HCT116 (cell line): ENCODE measurements at regions of chr12 and their contacts with region 1.

Region 1: DNA sequence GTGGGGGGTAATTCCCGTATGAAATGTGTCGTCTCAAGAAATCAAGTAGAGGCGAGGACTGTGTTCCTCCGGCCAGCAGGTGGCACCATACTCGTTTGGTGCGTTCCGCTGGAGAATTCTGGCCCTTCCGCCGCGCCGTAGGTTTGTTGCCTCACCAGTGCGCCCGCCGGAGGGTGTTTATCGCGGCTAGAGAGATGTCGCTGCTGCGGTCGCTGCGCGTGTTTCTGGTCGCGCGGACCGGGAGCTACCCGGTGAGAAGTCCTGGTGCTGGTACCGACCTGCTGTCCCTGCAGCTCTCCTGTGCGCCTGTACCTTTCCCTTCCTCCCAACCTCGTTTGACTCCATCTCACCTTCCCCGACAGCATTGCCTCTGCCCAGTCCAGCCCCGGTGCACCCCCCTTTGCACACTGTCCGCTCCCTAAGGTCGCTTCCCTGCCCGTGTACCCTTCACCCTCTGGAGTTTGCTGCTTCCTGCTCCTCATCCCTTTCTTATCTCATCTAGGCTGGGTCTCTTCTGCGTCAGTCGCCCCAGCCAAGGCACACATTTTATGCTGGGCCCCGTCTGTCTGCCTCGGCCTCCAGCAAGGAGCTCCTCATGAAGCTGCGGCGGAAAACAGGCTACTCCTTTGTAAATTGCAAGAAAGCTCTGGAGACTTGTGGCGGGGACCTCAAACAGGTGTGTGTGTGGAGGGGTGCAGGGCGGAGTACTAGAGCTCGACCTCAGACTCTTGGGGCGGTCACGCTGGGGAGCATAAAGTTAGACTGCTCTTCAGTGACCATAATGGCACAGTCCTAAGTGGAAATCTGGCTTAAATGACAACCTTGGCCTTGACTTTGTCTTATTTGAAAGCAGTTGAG is at the start of gene TSFM:
- DNase-seq: peak; percentile 89
- ATAC-seq: peak; percentile 89
- H3K4me3 ChIP-seq: peak within 1 kb of the TSS; percentile 98 to 100
- H3K27ac ChIP-seq: peak within 1 kb of the TSS; percentile 53
- H3K4me1 ChIP-seq: peaks cover 6 to 10% of the 10 kb centered on the region in 2 experiments
- H3K27me3 ChIP-seq: no peaks in the 10 kb centered on the region
- CTCF ChIP-seq: peak; percentile 76 to 93 (median 85)
- POLR2A ChIP-seq: peak; percentile 79
- RAD21 ChIP-seq: peak; percentile 47
- total RNA-seq, gene TSFM: 53.2 TPM

Region 2: DNA sequence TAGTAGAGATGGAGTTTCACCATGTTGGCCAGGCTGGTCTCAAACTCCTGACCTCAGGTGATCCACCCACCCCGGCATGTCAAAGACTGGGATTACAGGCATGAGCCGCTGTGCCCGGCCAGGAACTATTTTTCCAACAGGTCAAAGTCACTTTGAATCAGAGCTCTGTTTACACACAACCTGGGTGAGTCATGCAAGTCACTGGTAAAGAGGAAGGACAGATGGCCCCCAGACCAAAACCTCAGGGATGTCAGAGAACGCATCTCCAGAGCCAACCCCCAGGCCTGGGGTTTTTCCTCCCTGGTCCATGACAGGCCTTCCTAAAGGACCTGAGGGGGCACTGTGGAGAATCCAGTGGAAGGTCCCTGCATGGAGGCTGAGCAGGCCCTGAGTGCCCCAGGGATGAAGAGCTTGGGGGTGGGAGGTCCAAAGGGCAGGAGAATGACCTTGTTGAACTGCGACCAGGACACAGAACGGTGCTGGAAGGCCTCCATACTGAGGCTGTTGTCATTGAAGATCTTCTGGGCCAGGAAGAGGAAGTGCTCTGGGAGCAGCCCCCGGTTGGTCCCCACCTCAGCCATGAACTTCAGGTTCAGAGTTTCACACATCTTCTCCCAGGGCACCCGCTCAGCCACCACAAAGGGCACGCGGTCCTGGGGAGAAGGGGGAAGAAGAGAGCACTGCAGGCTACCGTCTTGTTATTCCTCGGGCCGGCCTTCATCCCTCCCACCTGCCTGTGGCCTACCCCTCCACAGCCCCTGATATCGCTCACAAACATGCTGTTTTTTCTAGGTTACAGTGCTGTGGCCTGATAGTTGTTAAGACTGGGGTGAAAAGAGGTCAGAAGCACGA is 680.8 kb before region 1 on chr12:
- CTCF ChIA-PET with region 1: no interaction called
- POLR2A ChIA-PET with region 1: no interaction called
- RAD21 ChIA-PET with region 1: no interaction called
- intact Hi-C with region 1: no loop called
- DNase-seq: no peak
- ATAC-seq: peak; percentile 34
- H3K4me3 ChIP-seq: no peak overlapping the region
- H3K27ac ChIP-seq: peak overlapping the region; percentile 8; the same call in 1 of the 2 replicates
- H3K4me1 ChIP-seq: peaks cover 11 to 21% of the 10 kb centered on the region in 2 experiments
- H3K27me3 ChIP-seq: no peaks in the 10 kb centered on the region
- CTCF ChIP-seq: no peak
- POLR2A ChIP-seq: no peak
- RAD21 ChIP-seq: no peak

Region 3: DNA sequence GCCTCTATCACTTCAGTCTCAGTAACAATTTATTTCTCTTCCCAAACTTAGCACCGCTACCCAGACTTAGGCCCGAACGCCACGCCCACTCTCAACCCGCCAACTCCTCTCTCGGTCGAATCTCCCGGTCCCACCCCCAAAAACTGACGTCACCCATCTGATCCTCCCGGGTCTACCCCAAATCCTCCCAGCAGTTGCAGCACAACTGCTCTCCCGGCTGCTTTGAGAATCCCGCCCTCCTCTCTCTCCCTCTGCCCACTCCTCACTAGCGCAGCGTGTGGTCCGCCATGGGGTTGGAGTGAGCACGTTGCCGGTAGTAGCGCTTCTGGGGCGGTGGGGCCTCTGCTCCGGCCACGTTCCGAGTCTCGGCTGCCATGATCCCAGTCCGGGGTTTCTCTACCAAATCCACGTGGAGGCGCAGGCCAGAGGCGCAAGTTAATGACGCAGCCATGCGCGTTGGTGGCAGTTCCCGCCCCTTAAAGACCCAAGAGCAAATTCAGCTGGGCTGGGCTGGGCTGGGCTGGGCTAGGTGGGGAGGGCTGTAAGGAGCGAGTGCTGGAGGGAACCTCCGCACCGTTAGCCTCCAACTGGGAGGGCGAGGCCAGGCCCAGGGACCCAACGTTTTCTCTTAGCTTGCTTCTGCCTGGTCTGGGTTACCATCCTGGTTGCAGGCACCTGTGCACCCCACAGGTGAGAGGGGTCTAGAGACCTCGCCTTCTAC is 11.0 kb before region 1 on chr12 and contains the start of gene METTL1:
- CTCF ChIA-PET with region 1: interaction called, 6 read pairs
- POLR2A ChIA-PET with region 1: interaction called, 6 read pairs
- RAD21 ChIA-PET with region 1: interaction called in 1 of 2 experiments, 3 read pairs
- intact Hi-C with region 1: loop called (anchors 1 kb)
- DNase-seq: peak; percentile 96
- ATAC-seq: peak; percentile 85
- H3K4me3 ChIP-seq: peak within 1 kb of the TSS; percentile 91 to 97
- H3K27ac ChIP-seq: peak within 1 kb of the TSS; percentile 93
- H3K4me1 ChIP-seq: peaks cover 14 to 28% of the 10 kb centered on the region in 2 experiments
- H3K27me3 ChIP-seq: no peaks in the 10 kb centered on the region
- CTCF ChIP-seq: no peak
- POLR2A ChIP-seq: no peak
- RAD21 ChIP-seq: no peak
- total RNA-seq, gene METTL1: 56.6 TPM